ENCODE measurements at regions of chr12 and their contacts with region 1.

Region 1: GRCh38 chr12:53213348-53213747 is 6.3 kb upstream of the ITGB7 start:
- DNase-seq: peak; percentile 95
- H3K4me3 Mint-ChIP-seq: peak overlapping the region; percentile 49
- H3K27ac Mint-ChIP-seq: peak overlapping the region; percentile 70
- H3K4me1 Mint-ChIP-seq: peaks cover 77% of the 10 kb centered on the region
- H3K27me3 Mint-ChIP-seq: no peaks in the 10 kb centered on the region

Region 2: GRCh38 chr12:53200458-53201176 is 12.7 kb before region 1 on chr12:
- intact Hi-C with region 1: loop called (anchors 1 kb)
- DNase-seq: peak; percentile 77
- H3K4me3 Mint-ChIP-seq: peak overlapping the region; percentile 77
- H3K27ac Mint-ChIP-seq: peak overlapping the region; percentile 85
- H3K4me1 Mint-ChIP-seq: peaks cover 53% of the 10 kb centered on the region
- H3K27me3 Mint-ChIP-seq: no peaks in the 10 kb centered on the region

Region 3: DNA sequence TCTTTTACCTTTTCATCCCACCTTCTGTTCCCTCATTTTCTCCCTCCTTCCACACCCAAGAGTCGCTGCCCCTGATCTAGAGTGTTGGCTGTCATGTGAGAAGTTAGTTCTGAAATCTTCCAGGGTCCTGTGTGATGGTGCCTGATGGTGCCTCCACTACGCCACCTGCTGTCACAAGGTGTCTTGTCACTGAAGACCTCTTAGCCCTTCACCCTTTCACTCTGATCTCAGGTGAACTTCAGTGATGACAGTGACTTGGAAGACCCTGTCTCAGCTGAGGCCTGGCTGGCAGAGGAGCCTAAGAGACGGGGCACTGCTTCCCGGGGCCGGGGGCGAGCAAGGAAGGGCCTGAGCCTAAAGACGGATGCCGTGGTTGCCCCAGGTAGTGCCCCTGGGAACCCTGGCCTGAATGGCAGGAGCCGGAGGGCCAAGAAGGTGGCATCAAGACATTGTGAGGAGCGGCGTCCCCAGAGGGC is 74.4 kb after region 1 on chr12:
- intact Hi-C with region 1: loop called (anchors 1 kb)
- DNase-seq: peak; percentile 90
- H3K4me3 Mint-ChIP-seq: no peak overlapping the region
- H3K27ac Mint-ChIP-seq: peak overlapping the region; percentile 47
- H3K4me1 Mint-ChIP-seq: peaks cover 9% of the 10 kb centered on the region
- H3K27me3 Mint-ChIP-seq: no peaks in the 10 kb centered on the region

Region 4: DNA sequence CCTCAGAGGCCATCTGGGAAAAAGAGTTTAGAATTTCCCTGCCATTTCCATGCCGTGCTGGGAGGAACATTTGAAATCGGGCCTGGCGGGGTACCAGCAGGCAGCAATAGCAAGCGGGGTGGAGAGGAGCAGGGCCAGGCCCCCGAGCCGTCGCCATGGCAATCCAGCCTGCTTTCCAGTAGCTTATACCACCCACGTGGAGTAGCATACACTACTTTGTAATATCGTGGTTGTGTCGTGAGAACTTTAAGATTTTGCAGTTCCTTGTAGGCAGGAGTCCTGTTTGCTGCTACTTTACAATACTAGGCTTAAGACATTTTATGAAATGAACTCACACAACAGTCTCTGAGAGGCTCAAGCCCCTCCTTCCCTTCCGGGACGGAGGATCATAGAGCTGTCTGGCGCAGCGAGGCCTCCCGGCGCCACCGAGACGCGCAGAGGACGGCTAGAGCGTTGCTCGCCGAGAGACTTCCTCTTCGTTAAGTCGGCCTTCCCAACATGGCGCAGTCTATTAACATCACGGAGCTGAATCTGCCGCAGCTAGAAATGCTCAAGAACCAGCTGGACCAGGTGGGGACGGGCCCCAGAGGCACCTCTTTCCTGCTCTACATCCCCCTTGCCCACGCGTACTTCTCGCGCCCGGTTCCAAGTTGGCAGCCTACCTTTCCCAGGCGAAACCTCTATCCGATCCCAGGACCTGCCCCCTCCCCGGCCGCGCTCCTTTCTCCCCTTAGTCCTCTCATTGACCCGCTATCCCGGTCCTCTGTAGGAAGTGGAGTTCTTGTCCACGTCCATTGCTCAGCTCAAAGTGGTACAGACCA is 81.9 kb after region 1 on chr12 and contains the start of gene PFDN5:
- intact Hi-C with region 1: loop called (anchors 1 kb)
- DNase-seq: peak; percentile 97
- H3K4me3 Mint-ChIP-seq: peak within 1 kb of the TSS; percentile 98
- H3K27ac Mint-ChIP-seq: peak within 1 kb of the TSS; percentile 90
- H3K4me1 Mint-ChIP-seq: peaks cover 33% of the 10 kb centered on the region
- H3K27me3 Mint-ChIP-seq: no peaks in the 10 kb centered on the region
- total RNA-seq, gene PFDN5: 319 and 342 TPM in 2 replicates